ENCODE measurements at regions of chr9 and their contacts with region 1.

Region 1: GRCh38 chr9:32378993-32379729 is 5.3 kb upstream of the ACO1 start:
- DNase-seq: peak; percentile 68
- CTCF ChIP-seq: peak; percentile 85

Region 2: GRCh38 chr9:32247168-32247567 is 132.0 kb before region 1 on chr9:
- CTCF ChIA-PET with region 1: no interaction called
- POLR2A ChIA-PET with region 1: no interaction called
- DNase-seq: no peak
- CTCF ChIP-seq: no peak

Region 3: GRCh38 chr9:32419921-32420320 is 40.8 kb after region 1 on chr9:
- CTCF ChIA-PET with region 1: interaction called, 21 read pairs
- POLR2A ChIA-PET with region 1: no interaction called
- DNase-seq: no peak
- CTCF ChIP-seq: no peak

Region 4: GRCh38 chr9:32526041-32526706 is 147.0 kb after region 1 on chr9 and contains the start of gene RIGI:
- CTCF ChIA-PET with region 1: interaction called, 31 read pairs
- POLR2A ChIA-PET with region 1: interaction called, 3 read pairs
- DNase-seq: peak; percentile 58
- CTCF ChIP-seq: peak; percentile 12

Region 5: GRCh38 chr9:32558408-32558934 is 179.3 kb after region 1 on chr9:
- CTCF ChIA-PET with region 1: interaction called, 88 read pairs
- POLR2A ChIA-PET with region 1: no interaction called
- DNase-seq: no peak
- CTCF ChIP-seq: no peak

Region 6: DNA sequence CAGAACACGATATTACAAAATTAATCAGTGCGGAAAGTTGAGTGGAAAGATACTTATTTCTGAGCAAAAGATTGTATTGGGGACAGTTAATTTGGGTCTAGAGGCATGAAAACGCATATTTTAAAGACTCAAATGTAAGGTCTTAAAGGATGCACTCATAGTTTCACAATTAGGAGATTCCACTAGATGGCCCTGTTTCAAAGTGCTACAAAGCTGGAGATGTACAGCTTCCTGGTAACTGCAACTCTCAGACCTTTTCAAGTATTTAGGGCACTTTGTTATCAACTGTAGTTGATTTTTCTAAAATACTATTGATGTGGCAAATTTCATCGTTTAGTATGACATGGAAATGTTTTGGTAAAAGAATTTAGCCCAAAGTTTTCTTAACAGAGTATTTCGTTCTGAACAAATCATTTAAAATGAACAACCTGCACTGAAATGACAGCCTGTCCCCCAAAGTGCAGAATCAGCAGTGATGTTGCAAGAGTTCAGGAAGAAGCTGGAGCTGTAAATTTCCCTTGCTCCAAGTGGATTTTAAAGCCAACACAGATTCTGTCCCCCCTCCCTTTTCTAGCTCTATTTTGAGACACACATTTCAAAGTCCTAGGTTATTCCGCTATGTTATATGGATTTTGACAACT is 210.0 kb after region 1 on chr9:
- CTCF ChIA-PET with region 1: interaction called, 872 read pairs
- POLR2A ChIA-PET with region 1: no interaction called
- DNase-seq: peak; percentile 38
- CTCF ChIP-seq: peak; percentile 39

Region 7: GRCh38 chr9:32978051-32978450 is 598.9 kb after region 1 on chr9:
- CTCF ChIA-PET with region 1: interaction called, 176 read pairs
- POLR2A ChIA-PET with region 1: no interaction called
- DNase-seq: no peak
- CTCF ChIP-seq: no peak

Measured in GM10248 (cell line).